CD14-positive monocyte (primary cell): ENCODE measurements at regions of chr1 and their contacts with region 1.

Region 1: GRCh38 chr1:58883037-58883887 is 99.4 kb upstream of the JUN start:
- DNase-seq: peak; percentile 95 to 99 (median 99)
- H3K4me3 ChIP-seq: peak overlapping the region in 2 of 3 experiments; percentile 9 to 47
- H3K4me3 Mint-ChIP-seq: peak overlapping the region in 1 of 2 donors; percentile 65
- H3K27ac ChIP-seq: peak overlapping the region; percentile 90 to 94
- H3K27ac Mint-ChIP-seq: peak overlapping the region; percentile 92 to 97 (median 95)
- H3K4me1 ChIP-seq: peaks cover 55 to 61% of the 10 kb centered on the region in 2 donors
- H3K4me1 Mint-ChIP-seq: peaks cover 79% of the 10 kb centered on the region
- H3K27me3 ChIP-seq: no peaks in the 10 kb centered on the region
- H3K27me3 Mint-ChIP-seq: peaks cover 0 to 3% (median 0%) of the 10 kb centered on the region in 3 donors
- CTCF ChIP-seq: no peak

Region 2: GRCh38 chr1:58903514-58904298 is 20.4 kb after region 1 on chr1:
- intact Hi-C with region 1: loop called in 1 of 2 experiments (anchors 2 kb)
- DNase-seq: peak; percentile 74 to 82 (median 76)
- H3K4me3 ChIP-seq: peak overlapping the region; percentile 33 to 76 (median 48)
- H3K4me3 Mint-ChIP-seq: peak overlapping the region; percentile 80 to 88
- H3K27ac ChIP-seq: peak overlapping the region; percentile 91 to 92
- H3K27ac Mint-ChIP-seq: peak overlapping the region; percentile 92 to 97 (median 97)
- H3K4me1 ChIP-seq: peaks cover 34 to 49% of the 10 kb centered on the region in 2 donors
- H3K4me1 Mint-ChIP-seq: peaks cover 46% of the 10 kb centered on the region
- H3K27me3 ChIP-seq: no peaks in the 10 kb centered on the region
- H3K27me3 Mint-ChIP-seq: peaks cover 0 to 6% (median 4%) of the 10 kb centered on the region in 3 donors
- CTCF ChIP-seq: no peak

Region 3: GRCh38 chr1:59013276-59013927 is 130.1 kb after region 1 on chr1:
- intact Hi-C with region 1: loop called in 1 of 2 experiments (anchors 10 kb)
- DNase-seq: peak in 1 of 3 donors; percentile 23
- H3K4me3 ChIP-seq: no peak overlapping the region
- H3K4me3 Mint-ChIP-seq: peak overlapping the region; percentile 34 to 65
- H3K27ac ChIP-seq: no peak overlapping the region
- H3K27ac Mint-ChIP-seq: peak overlapping the region in 2 of 7 donors; percentile 10 to 77
- H3K4me1 ChIP-seq: peaks cover 17 to 22% of the 10 kb centered on the region in 2 donors
- H3K4me1 Mint-ChIP-seq: peaks cover 34% of the 10 kb centered on the region
- H3K27me3 ChIP-seq: no peaks in the 10 kb centered on the region
- H3K27me3 Mint-ChIP-seq: peaks cover 2 to 5% (median 4%) of the 10 kb centered on the region in 3 donors
- CTCF ChIP-seq: no peak

Region 4: GRCh38 chr1:59290193-59290947 is 407.1 kb after region 1 on chr1:
- intact Hi-C with region 1: loop called (anchors 5 kb)
- DNase-seq: peak; percentile 62 to 85 (median 76)
- H3K4me3 ChIP-seq: no peak overlapping the region
- H3K4me3 Mint-ChIP-seq: no peak overlapping the region
- H3K27ac ChIP-seq: peak overlapping the region in 1 of 2 donors; percentile 88
- H3K27ac Mint-ChIP-seq: peak overlapping the region; percentile 2 to 95 (median 90)
- H3K4me1 ChIP-seq: peaks cover 37 to 38% of the 10 kb centered on the region in 2 donors
- H3K4me1 Mint-ChIP-seq: peaks cover 44% of the 10 kb centered on the region
- H3K27me3 ChIP-seq: no peaks in the 10 kb centered on the region
- H3K27me3 Mint-ChIP-seq: no peaks in the 10 kb centered on the region
- CTCF ChIP-seq: peak; percentile 73